Activated naive CD4-positive, alpha-beta T cell treated with anti-CD3 and anti-CD28 coated beads for 36 hours (primary cell): ENCODE measurements at regions of chr20 and their contacts with region 1.

Region 1: GRCh38 chr20:47501483-47502270 is at the start of gene NCOA3:
- DNase-seq: peak; percentile 96
- H3K4me3 Mint-ChIP-seq: peak within 1 kb of the TSS; percentile 97
- H3K27ac Mint-ChIP-seq: peak within 1 kb of the TSS; percentile 95
- H3K4me1 Mint-ChIP-seq: peaks cover 52% of the 10 kb centered on the region
- H3K27me3 Mint-ChIP-seq: no peaks in the 10 kb centered on the region
- total RNA-seq, gene NCOA3: 48.3 to 53.2 TPM

Region 2: DNA sequence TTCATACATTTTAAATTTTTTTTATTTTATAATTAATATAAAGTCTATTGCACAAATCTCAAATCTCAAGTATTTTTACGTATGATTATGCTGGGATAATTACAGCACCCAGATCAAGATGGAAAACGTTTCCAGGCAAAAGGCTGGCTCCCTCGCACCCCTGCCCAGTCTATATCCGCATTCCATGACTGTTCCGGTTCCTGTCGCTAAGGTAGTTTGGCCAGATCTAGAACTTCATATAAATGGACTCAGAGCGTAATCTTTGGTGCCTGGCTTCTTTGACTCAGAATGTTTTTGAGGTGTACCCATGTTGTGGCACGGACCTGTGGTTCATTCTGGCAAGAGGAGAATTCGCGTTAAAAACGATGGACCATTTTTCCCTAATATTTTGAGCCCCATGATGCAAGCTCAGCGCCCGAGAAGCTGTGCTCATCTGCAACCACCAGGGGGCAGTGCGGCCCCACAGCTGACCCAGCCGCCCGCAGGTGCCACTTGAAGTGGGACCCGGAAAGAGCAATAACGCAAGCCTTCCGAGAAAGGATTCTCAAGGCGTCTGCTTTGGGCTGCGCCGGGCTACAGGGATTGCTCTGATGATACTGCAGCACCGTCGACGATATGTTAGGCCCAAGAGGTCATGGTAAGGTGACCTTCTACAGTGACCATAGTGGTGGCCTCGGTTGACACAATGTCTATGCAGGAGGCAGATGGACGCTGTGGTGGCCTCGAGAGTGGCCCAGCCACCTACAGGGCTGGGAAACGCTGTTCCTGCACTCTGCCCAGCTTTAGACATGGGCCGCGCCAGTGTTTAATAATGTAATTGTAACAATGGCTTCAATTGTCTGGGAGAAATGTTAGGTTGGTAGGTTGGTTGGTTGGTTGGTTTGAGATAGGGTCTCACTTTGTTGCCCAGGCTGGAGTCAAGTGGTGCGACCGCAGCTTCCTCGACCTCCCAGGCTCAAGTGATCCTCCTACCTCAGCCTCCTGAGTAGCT is 305.3 kb before region 1 on chr20:
- CTCF ChIA-PET with region 1: no interaction called
- intact Hi-C with region 1: loop called (anchors 5 kb)
- DNase-seq: peak; percentile 87
- H3K4me3 Mint-ChIP-seq: no peak overlapping the region
- H3K27ac Mint-ChIP-seq: no peak overlapping the region
- H3K4me1 Mint-ChIP-seq: peaks cover 13% of the 10 kb centered on the region
- H3K27me3 Mint-ChIP-seq: peaks cover 3% of the 10 kb centered on the region

Region 3: DNA sequence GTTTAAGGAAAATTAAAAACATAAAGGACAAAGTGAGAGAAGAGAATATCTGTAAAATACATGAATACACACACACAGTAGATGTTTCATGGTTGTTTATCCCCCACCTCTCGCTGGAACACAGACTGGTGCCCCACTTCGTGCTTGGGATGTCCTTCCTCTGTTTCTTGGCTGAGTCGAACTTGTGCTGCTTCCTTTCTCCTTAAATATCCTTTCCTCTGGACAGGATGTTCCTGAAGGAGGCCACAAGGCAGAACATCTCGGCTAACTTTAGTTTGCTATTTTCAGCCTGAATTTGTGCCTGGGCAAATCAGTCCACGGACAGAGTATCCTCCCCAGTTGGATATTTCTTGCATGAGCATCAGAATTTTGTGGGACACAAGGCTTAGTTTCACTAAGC is 90.5 kb before region 1 on chr20:
- CTCF ChIA-PET with region 1: no interaction called
- intact Hi-C with region 1: loop called (anchors 1 kb)
- DNase-seq: no peak
- H3K4me3 Mint-ChIP-seq: no peak overlapping the region
- H3K27ac Mint-ChIP-seq: no peak overlapping the region
- H3K4me1 Mint-ChIP-seq: peaks cover 29% of the 10 kb centered on the region
- H3K27me3 Mint-ChIP-seq: no peaks in the 10 kb centered on the region

Region 4: DNA sequence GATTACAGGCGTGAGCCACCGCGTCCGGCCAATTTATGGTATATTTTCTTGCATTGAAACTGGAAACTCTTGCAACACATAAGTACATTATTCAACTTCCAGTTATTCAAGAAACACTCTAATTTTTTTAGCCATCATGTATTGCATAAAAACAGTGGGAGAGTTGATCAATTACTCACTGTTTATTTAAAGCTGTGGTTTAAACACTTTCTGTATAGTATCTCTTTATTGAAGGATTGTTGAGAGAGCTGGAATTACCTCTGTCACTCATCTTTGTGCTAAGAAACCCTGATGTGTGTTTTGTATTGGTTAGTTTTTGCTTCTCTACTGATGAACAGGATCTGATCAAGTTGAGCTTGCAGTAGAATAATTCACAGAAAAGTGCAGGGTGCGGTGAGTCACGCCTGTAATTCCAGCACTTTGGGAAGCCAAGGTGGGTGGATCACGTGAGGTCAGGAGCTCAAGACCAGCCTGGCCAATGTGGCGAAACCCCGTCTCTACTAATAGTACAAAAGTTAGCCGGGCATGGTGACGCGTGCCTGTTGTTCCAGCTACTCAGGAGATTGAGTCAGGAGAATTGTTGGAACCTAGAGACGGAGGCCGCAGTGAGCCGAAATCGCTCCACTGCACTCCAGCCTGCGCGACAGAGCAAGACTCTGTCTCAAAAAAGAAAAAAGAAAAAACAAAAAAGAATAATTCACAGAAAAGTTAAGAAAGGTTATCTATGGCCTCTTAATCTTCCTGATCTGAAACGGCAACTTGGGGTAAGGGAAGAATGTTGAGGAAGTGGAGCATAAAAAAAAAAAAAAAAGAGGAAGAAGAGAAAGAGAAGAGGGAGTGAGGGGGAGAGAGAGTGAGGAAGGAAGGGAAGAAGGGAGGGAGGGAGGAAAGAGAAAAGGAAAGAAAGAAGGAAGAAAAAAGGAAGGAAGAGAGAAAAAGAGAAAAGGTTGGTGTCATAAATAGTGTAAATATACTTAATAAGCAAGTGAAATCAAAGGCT is 69.2 kb before region 1 on chr20:
- CTCF ChIA-PET with region 1: no interaction called
- intact Hi-C with region 1: no loop called
- DNase-seq: no peak
- H3K4me3 Mint-ChIP-seq: no peak overlapping the region
- H3K27ac Mint-ChIP-seq: no peak overlapping the region
- H3K4me1 Mint-ChIP-seq: no peaks in the 10 kb centered on the region
- H3K27me3 Mint-ChIP-seq: no peaks in the 10 kb centered on the region

Region 5: DNA sequence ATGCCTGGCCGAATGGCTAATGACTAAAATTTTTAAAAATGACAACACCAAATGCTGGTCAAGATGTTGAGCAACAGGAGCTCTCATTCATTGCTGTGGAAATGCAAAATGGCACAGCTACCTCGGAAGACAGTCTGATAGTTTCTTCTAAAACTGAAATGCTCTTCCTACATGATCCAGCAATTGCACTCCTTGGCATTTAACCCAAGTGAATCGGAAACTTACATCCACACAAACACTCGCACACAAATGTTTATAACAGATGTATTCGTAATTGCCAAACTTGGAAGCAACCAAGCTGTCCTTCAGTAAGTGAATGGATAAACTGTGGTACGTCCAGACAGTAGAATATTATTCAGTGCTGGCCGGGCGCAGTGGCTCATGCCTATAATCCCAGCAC is 56.4 kb before region 1 on chr20:
- CTCF ChIA-PET with region 1: no interaction called
- intact Hi-C with region 1: no loop called
- DNase-seq: no peak
- H3K4me3 Mint-ChIP-seq: no peak overlapping the region
- H3K27ac Mint-ChIP-seq: no peak overlapping the region
- H3K4me1 Mint-ChIP-seq: no peaks in the 10 kb centered on the region
- H3K27me3 Mint-ChIP-seq: no peaks in the 10 kb centered on the region

Region 6: GRCh38 chr20:47487175-47487917 is 14.3 kb before region 1 on chr20:
- CTCF ChIA-PET with region 1: interaction called, 11 read pairs
- intact Hi-C with region 1: loop called (anchors 1 kb)
- DNase-seq: peak; percentile 72
- H3K4me3 Mint-ChIP-seq: peak overlapping the region; percentile 58
- H3K27ac Mint-ChIP-seq: peak overlapping the region; percentile 98
- H3K4me1 Mint-ChIP-seq: peaks cover 53% of the 10 kb centered on the region
- H3K27me3 Mint-ChIP-seq: no peaks in the 10 kb centered on the region

Region 7: DNA sequence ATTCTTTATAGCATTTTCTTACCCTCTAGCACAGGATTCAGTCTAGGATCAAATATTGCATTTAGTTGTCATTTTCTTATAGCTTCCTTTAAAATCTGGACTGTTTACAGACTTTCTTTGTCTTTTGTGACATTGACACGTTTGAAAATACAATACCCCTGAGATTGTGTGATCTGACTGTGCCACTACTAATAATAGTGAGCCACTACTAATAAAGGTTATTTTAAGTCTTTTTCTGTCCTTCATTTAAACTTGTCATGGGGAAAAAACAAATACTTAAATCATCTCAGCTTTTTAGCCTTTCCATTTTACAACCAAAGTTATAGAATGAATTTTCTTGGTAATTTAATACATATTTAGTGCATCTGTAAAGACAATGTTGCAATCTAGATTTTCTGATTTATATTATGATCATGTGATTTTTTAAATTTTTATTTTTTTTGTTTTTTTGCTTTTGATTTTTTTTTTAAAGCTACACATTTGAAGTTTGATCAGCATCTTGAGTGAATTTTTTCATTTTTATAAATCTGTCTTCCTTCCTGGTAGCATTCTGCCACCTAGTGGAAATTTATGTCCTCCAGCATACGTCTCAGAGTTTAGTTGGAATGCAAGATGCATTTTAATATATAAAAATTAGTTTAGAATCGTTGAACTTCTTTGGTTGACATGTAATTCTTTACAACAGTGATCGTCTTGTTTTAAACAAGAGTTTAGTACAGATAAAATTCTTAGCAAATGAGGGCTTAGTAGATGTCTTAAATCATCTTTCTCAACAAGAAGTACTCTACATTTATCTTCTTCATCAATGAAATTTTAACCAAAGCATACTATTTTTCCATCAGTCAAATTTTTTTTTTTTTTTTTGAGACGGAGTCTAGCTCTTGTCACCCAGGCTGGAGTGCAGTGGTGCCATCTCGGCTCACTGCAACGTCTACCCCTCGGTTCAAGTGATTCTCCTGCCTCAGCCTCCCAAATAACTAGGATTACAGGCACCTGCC is 119.4 kb after region 1 on chr20:
- CTCF ChIA-PET with region 1: interaction called, 8 read pairs
- intact Hi-C with region 1: loop called (anchors 1 kb)
- DNase-seq: peak; percentile 22
- H3K4me3 Mint-ChIP-seq: no peak overlapping the region
- H3K27ac Mint-ChIP-seq: peak overlapping the region; percentile 13
- H3K4me1 Mint-ChIP-seq: peaks cover 33% of the 10 kb centered on the region
- H3K27me3 Mint-ChIP-seq: no peaks in the 10 kb centered on the region